CD4-positive, alpha-beta T cell (primary cell): ENCODE measurements at regions of chr4 and their contacts with region 1.

Region 1: GRCh38 chr4:2008875-2009703 is at the start of gene NELFA:
- DNase-seq: peak; percentile 93 to 98 (median 95)
- ATAC-seq: peak; percentile 79
- H3K4me3 ChIP-seq: peak within 1 kb of the TSS; percentile 87
- H3K4me3 Mint-ChIP-seq: peak within 1 kb of the TSS; percentile 98
- H3K27ac ChIP-seq: peak within 1 kb of the TSS; percentile 97 to 99
- H3K27ac Mint-ChIP-seq: peak within 1 kb of the TSS; percentile 95
- H3K4me1 ChIP-seq: peaks cover 31% of the 10 kb centered on the region
- H3K4me1 Mint-ChIP-seq: peaks cover 39% of the 10 kb centered on the region
- H3K27me3 ChIP-seq: no peaks in the 10 kb centered on the region
- H3K27me3 Mint-ChIP-seq: no peaks in the 10 kb centered on the region
- CTCF ChIP-seq: no peak
- total RNA-seq, gene NELFA: 39.9 to 40.1 TPM

Region 2: GRCh38 chr4:1693129-1693896 is 315.8 kb before region 1 on chr4:
- CTCF ChIA-PET with region 1: no interaction called
- POLR2A ChIA-PET with region 1: no interaction called
- intact Hi-C with region 1: loop called in 1 of 2 experiments (anchors 5 kb)
- DNase-seq: peak; percentile 63 to 91 (median 75)
- ATAC-seq: peak; percentile 93
- H3K4me3 ChIP-seq: no peak overlapping the region
- H3K4me3 Mint-ChIP-seq: no peak overlapping the region
- H3K27ac ChIP-seq: peak overlapping the region in 1 of 2 donors; percentile 17
- H3K27ac Mint-ChIP-seq: peak overlapping the region; percentile 68
- H3K4me1 ChIP-seq: peaks cover 5% of the 10 kb centered on the region
- H3K4me1 Mint-ChIP-seq: peaks cover 5% of the 10 kb centered on the region
- H3K27me3 ChIP-seq: no peaks in the 10 kb centered on the region
- H3K27me3 Mint-ChIP-seq: no peaks in the 10 kb centered on the region
- CTCF ChIP-seq: peak; percentile 87

Region 3: GRCh38 chr4:1870578-1871443 is 138.3 kb before region 1 on chr4 and contains the start of gene NSD2:
- CTCF ChIA-PET with region 1: no interaction called
- POLR2A ChIA-PET with region 1: interaction called, 4 read pairs
- intact Hi-C with region 1: loop called in 1 of 2 experiments (anchors 5 kb)
- DNase-seq: peak; percentile 80 to 97 (median 88)
- ATAC-seq: peak; percentile 63
- H3K4me3 ChIP-seq: peak within 1 kb of the TSS; percentile 63
- H3K4me3 Mint-ChIP-seq: peak within 1 kb of the TSS; percentile 92
- H3K27ac ChIP-seq: peak within 1 kb of the TSS; percentile 79 to 94
- H3K27ac Mint-ChIP-seq: peak within 1 kb of the TSS; percentile 89
- H3K4me1 ChIP-seq: peaks cover 29% of the 10 kb centered on the region
- H3K4me1 Mint-ChIP-seq: peaks cover 34% of the 10 kb centered on the region
- H3K27me3 ChIP-seq: no peaks in the 10 kb centered on the region
- H3K27me3 Mint-ChIP-seq: peaks cover 5% of the 10 kb centered on the region
- CTCF ChIP-seq: no peak
- total RNA-seq, gene NSD2: 42.4 to 45.8 TPM

Region 4: GRCh38 chr4:2041234-2042130 is 32.4 kb after region 1 on chr4:
- CTCF ChIA-PET with region 1: no interaction called
- POLR2A ChIA-PET with region 1: interaction called, 6 read pairs
- intact Hi-C with region 1: loop called in 1 of 2 experiments (anchors 1 kb)
- DNase-seq: peak; percentile 63 to 91 (median 77)
- ATAC-seq: peak; percentile 58
- H3K4me3 ChIP-seq: peak overlapping the region; percentile 78
- H3K4me3 Mint-ChIP-seq: peak overlapping the region; percentile 78
- H3K27ac ChIP-seq: no peak overlapping the region
- H3K27ac Mint-ChIP-seq: no peak overlapping the region
- H3K4me1 ChIP-seq: peaks cover 23% of the 10 kb centered on the region
- H3K4me1 Mint-ChIP-seq: peaks cover 6% of the 10 kb centered on the region
- H3K27me3 ChIP-seq: peaks cover 13 to 23% of the 10 kb centered on the region in 2 experiments
- H3K27me3 Mint-ChIP-seq: peaks cover 39% of the 10 kb centered on the region
- CTCF ChIP-seq: no peak